B cell (primary cell): ENCODE measurements at regions of chr3 and their contacts with region 1.

Region 1: GRCh38 chr3:71064288-71064955 is 519.1 kb downstream of the FOXP1 start:
- DNase-seq: peak; percentile 88
- ATAC-seq: peak; percentile 45
- H3K4me3 ChIP-seq: peak overlapping the region; percentile 62 to 94 (median 76)
- H3K4me3 Mint-ChIP-seq: no peak overlapping the region
- H3K27ac ChIP-seq: peak overlapping the region; percentile 83 to 91
- H3K27ac Mint-ChIP-seq: no peak overlapping the region
- H3K4me1 ChIP-seq: peaks cover 56 to 76% of the 10 kb centered on the region in 2 donors
- H3K4me1 Mint-ChIP-seq: peaks cover 65% of the 10 kb centered on the region
- H3K27me3 ChIP-seq: no peaks in the 10 kb centered on the region
- H3K27me3 Mint-ChIP-seq: no peaks in the 10 kb centered on the region
- CTCF ChIP-seq: no peak

Region 2: GRCh38 chr3:71031914-71032521 is 32.4 kb before region 1 on chr3:
- CTCF ChIA-PET with region 1: interaction called, 4 read pairs
- POLR2A ChIA-PET with region 1: interaction called, 3 read pairs
- intact Hi-C with region 1: loop called (anchors 1 kb)
- DNase-seq: peak; percentile 92
- ATAC-seq: peak; percentile 94
- H3K4me3 ChIP-seq: peak overlapping the region in 2 of 5 experiments; percentile 10 to 31
- H3K4me3 Mint-ChIP-seq: peak overlapping the region; percentile 69
- H3K27ac ChIP-seq: peak overlapping the region; percentile 89 to 91
- H3K27ac Mint-ChIP-seq: peak overlapping the region; percentile 96
- H3K4me1 ChIP-seq: peaks cover 69 to 74% of the 10 kb centered on the region in 2 donors
- H3K4me1 Mint-ChIP-seq: peaks cover 90% of the 10 kb centered on the region
- H3K27me3 ChIP-seq: no peaks in the 10 kb centered on the region
- H3K27me3 Mint-ChIP-seq: no peaks in the 10 kb centered on the region
- CTCF ChIP-seq: no peak

Region 3: GRCh38 chr3:71051893-71052687 is 12.3 kb before region 1 on chr3:
- CTCF ChIA-PET with region 1: interaction called, 9 read pairs
- POLR2A ChIA-PET with region 1: interaction called, 4 read pairs
- intact Hi-C with region 1: loop called (anchors 1 kb)
- DNase-seq: no peak
- ATAC-seq: peak; percentile 39
- H3K4me3 ChIP-seq: no peak overlapping the region
- H3K4me3 Mint-ChIP-seq: peak overlapping the region; percentile 27
- H3K27ac ChIP-seq: peak overlapping the region in 1 of 2 donors; percentile 28
- H3K27ac Mint-ChIP-seq: peak overlapping the region; percentile 75
- H3K4me1 ChIP-seq: peaks cover 66 to 72% of the 10 kb centered on the region in 2 donors
- H3K4me1 Mint-ChIP-seq: peaks cover 100% of the 10 kb centered on the region
- H3K27me3 ChIP-seq: no peaks in the 10 kb centered on the region
- H3K27me3 Mint-ChIP-seq: no peaks in the 10 kb centered on the region
- CTCF ChIP-seq: no peak

Region 4: GRCh38 chr3:71087143-71088018 is 23.0 kb after region 1 on chr3:
- CTCF ChIA-PET with region 1: interaction called, 19 read pairs
- POLR2A ChIA-PET with region 1: interaction called, 5 read pairs
- intact Hi-C with region 1: loop called (anchors 1 kb)
- DNase-seq: peak; percentile 82
- ATAC-seq: peak; percentile 67
- H3K4me3 ChIP-seq: peak overlapping the region in 1 of 5 experiments; percentile 39
- H3K4me3 Mint-ChIP-seq: peak overlapping the region; percentile 72
- H3K27ac ChIP-seq: peak overlapping the region; percentile 87 to 91
- H3K27ac Mint-ChIP-seq: peak overlapping the region; percentile 88
- H3K4me1 ChIP-seq: peaks cover 88 to 93% of the 10 kb centered on the region in 2 donors
- H3K4me1 Mint-ChIP-seq: peaks cover 86% of the 10 kb centered on the region
- H3K27me3 ChIP-seq: no peaks in the 10 kb centered on the region
- H3K27me3 Mint-ChIP-seq: no peaks in the 10 kb centered on the region
- CTCF ChIP-seq: no peak

Region 5: GRCh38 chr3:71168880-71169411 is 104.5 kb after region 1 on chr3:
- CTCF ChIA-PET with region 1: no interaction called
- POLR2A ChIA-PET with region 1: interaction called, 10 read pairs
- intact Hi-C with region 1: no loop called
- DNase-seq: no peak
- ATAC-seq: no peak
- H3K4me3 ChIP-seq: no peak overlapping the region
- H3K4me3 Mint-ChIP-seq: no peak overlapping the region
- H3K27ac ChIP-seq: peak overlapping the region in 1 of 2 donors; percentile 24
- H3K27ac Mint-ChIP-seq: peak overlapping the region; percentile 59
- H3K4me1 ChIP-seq: no peaks in the 10 kb centered on the region
- H3K4me1 Mint-ChIP-seq: peaks cover 16% of the 10 kb centered on the region
- H3K27me3 ChIP-seq: no peaks in the 10 kb centered on the region
- H3K27me3 Mint-ChIP-seq: no peaks in the 10 kb centered on the region
- CTCF ChIP-seq: no peak

Region 6: GRCh38 chr3:71262364-71263265 is 198.2 kb after region 1 on chr3:
- CTCF ChIA-PET with region 1: no interaction called
- POLR2A ChIA-PET with region 1: no interaction called
- intact Hi-C with region 1: no loop called
- DNase-seq: no peak
- ATAC-seq: no peak
- H3K4me3 ChIP-seq: no peak overlapping the region
- H3K4me3 Mint-ChIP-seq: no peak overlapping the region
- H3K27ac ChIP-seq: peak overlapping the region in 1 of 2 donors; percentile 21
- H3K27ac Mint-ChIP-seq: peak overlapping the region; percentile 76
- H3K4me1 ChIP-seq: peaks cover 0 to 9% of the 10 kb centered on the region in 2 donors
- H3K4me1 Mint-ChIP-seq: peaks cover 64% of the 10 kb centered on the region
- H3K27me3 ChIP-seq: no peaks in the 10 kb centered on the region
- H3K27me3 Mint-ChIP-seq: no peaks in the 10 kb centered on the region
- CTCF ChIP-seq: no peak

Region 7: GRCh38 chr3:71305231-71306206 is 241.1 kb after region 1 on chr3:
- CTCF ChIA-PET with region 1: no interaction called
- POLR2A ChIA-PET with region 1: no interaction called
- intact Hi-C with region 1: loop called (anchors 5 kb)
- DNase-seq: peak; percentile 49
- ATAC-seq: peak; percentile 60
- H3K4me3 ChIP-seq: peak overlapping the region; percentile 50 to 85 (median 67)
- H3K4me3 Mint-ChIP-seq: peak overlapping the region; percentile 88
- H3K27ac ChIP-seq: peak overlapping the region; percentile 70 to 84
- H3K27ac Mint-ChIP-seq: peak overlapping the region; percentile 94
- H3K4me1 ChIP-seq: peaks cover 47 to 57% of the 10 kb centered on the region in 2 donors
- H3K4me1 Mint-ChIP-seq: peaks cover 77% of the 10 kb centered on the region
- H3K27me3 ChIP-seq: no peaks in the 10 kb centered on the region
- H3K27me3 Mint-ChIP-seq: no peaks in the 10 kb centered on the region
- CTCF ChIP-seq: no peak